Dendritic cell treated with granulocyte-macrophage colony-stimulating factor and Interleukin-4, amounts not matched to agents 40 ng/mL and 50 ng/mL, for 4 days (primary cell): ENCODE measurements at regions of chr17 and their contacts with region 1.

Region 1: DNA sequence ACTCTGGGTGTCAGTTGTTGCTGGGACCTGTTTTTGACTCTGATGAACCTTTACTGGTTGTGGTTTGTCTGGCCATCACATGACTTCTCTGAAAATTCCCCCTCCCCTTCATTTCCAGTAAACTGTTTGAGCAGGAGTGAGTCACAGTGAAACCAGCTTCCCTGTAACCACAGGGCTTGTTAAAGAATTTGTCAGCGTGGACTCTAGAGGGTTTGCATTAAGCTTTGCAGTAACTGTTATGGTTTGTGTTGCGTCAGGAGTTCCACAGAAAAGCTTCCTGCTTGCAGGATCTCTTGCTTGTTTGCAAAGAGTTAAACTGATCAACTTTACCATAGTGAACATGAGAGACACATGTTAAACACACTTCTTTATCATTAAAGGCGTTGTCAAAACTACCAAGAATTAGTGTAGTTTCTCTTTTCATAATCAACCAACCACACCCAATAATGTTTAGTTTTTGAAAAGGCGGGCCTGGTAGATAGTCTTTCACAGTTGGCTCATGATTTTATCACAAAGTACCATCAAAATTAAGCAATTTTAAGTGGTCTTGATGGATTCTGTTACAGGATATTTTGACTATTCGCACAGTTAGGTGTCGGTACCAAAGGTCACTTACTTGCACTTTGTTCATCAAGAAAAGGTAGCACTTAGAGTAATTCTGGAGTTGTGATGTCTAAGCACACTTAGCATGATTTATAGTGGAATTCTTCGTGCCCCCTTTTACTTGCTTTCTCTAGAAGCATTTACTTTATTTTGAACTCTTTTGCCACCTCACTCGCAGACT is 79.3 kb downstream of the VMP1 start:
- H3K4me3 Mint-ChIP-seq: peak overlapping the region; percentile 61
- H3K27ac Mint-ChIP-seq: peak overlapping the region; percentile 97
- H3K4me1 Mint-ChIP-seq: peaks cover 49% of the 10 kb centered on the region
- H3K27me3 Mint-ChIP-seq: no peaks in the 10 kb centered on the region

Region 2: DNA sequence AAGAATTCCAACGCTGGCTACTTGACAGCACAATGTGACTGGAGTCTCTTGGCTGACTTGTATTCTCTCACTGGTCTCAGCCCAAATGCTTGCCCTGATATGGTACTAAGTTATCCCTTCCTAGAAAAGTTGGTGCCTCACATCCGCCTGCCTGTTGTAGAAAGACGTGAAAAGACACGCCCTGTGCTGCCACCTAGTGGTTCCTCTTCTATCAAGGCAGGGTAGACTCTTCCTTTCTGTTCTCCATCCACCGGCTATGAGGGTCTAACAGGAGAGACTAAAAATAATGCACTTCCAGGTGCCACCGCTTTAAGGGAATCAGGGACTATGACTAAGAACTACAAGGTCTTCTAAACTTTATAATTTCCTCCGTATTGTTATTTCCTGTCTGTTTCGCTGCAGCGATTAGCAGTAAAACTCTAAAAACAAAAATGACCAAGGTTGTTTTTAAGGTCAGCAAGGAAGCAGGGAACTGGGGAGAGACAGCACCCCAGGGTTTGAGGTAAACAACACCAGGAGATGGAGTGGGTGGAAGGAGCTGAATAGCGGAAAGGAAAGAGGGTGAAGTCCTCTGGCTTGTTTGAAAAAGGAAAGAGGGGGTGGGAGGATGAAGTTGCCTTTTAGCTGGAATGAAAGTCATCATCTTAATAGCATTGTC is 345.8 kb before region 1 on chr17:
- intact Hi-C with region 1: no loop called
- H3K4me3 Mint-ChIP-seq: peak overlapping the region; percentile 40
- H3K27ac Mint-ChIP-seq: peak overlapping the region; percentile 47
- H3K4me1 Mint-ChIP-seq: peaks cover 49% of the 10 kb centered on the region
- H3K27me3 Mint-ChIP-seq: no peaks in the 10 kb centered on the region

Region 3: DNA sequence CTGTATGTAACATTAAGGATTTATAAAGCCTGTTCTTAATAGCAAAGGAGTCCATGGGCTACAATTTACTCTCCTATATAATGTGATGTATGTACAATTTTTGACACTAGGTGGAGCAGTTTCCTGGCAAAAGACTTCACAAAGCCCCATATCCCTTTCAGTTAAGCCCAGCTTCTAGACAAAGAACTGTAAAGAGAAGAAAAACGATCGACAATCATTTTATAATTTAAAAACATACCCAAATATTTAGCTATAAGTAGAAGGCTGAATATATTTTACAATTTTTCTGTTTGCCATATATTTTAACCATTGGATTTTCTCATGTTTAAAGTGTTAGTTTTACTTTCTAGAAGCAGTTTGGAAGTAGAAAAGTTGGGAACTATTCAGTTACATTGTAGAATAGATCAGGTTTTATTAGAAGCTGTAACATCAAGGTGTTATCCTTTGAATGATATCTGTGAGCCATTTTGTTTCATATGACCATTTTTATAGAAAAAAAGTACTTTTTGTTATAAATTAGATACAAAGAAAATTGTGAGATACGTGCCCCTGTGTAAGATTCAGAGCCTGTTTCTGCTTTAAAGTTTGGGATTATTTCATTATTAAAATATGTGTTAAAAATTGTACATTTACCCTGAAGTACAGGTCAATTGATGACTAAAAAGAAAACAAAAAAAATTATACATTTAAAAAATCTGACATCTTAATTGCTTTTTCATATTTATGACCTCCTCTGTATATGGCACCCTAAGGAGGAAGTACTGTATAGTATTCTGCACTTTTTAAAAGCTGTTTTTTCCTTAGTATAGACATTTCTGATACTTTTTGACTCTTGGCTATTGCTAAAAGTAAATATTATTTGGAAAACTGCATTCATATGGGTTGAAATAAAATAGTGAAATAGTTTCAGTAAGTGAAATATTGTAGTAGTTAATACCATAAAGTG is 32.9 kb before region 1 on chr17:
- intact Hi-C with region 1: loop called (anchors 5 kb)
- H3K4me3 Mint-ChIP-seq: no peak overlapping the region
- H3K27ac Mint-ChIP-seq: peak overlapping the region; percentile 83
- H3K4me1 Mint-ChIP-seq: peaks cover 37% of the 10 kb centered on the region
- H3K27me3 Mint-ChIP-seq: no peaks in the 10 kb centered on the region

Region 4: DNA sequence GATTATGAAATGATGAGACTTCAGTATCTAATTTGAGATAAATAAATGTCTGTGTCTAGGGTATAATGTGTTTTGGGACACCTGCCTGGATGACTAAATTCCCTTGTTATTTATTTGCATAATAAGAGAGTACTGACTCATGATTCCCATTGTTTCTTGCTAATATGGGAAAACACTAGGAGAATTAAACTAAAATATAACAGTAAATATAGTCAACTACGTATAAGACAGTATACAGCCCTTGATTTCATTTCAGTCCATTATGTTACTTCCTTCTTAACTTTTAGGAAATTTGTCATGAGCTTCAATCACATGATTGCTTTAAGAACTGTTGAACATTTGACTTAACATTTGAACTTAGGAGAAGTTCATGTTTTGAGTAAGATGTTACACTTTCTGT is 16.8 kb before region 1 on chr17:
- intact Hi-C with region 1: loop called (anchors 1 kb)
- H3K4me3 Mint-ChIP-seq: no peak overlapping the region
- H3K27ac Mint-ChIP-seq: peak overlapping the region; percentile 78
- H3K4me1 Mint-ChIP-seq: peaks cover 20% of the 10 kb centered on the region
- H3K27me3 Mint-ChIP-seq: no peaks in the 10 kb centered on the region

Region 5: GRCh38 chr17:59804901-59805465 is 18.3 kb after region 1 on chr17:
- intact Hi-C with region 1: loop called (anchors 1 kb)
- H3K4me3 Mint-ChIP-seq: peak overlapping the region; percentile 63
- H3K27ac Mint-ChIP-seq: peak overlapping the region; percentile 89
- H3K4me1 Mint-ChIP-seq: peaks cover 25% of the 10 kb centered on the region
- H3K27me3 Mint-ChIP-seq: no peaks in the 10 kb centered on the region

Region 6: GRCh38 chr17:59837308-59838051 is 50.8 kb after region 1 on chr17:
- intact Hi-C with region 1: loop called (anchors 1 kb)
- H3K4me3 Mint-ChIP-seq: peak overlapping the region; percentile 93
- H3K27ac Mint-ChIP-seq: peak overlapping the region; percentile 100
- H3K4me1 Mint-ChIP-seq: peaks cover 17% of the 10 kb centered on the region
- H3K27me3 Mint-ChIP-seq: no peaks in the 10 kb centered on the region

Region 7: GRCh38 chr17:60006124-60006523 is 219.4 kb after region 1 on chr17:
- intact Hi-C with region 1: no loop called
- H3K4me3 Mint-ChIP-seq: no peak overlapping the region
- H3K27ac Mint-ChIP-seq: no peak overlapping the region
- H3K4me1 Mint-ChIP-seq: no peaks in the 10 kb centered on the region
- H3K27me3 Mint-ChIP-seq: peaks cover 6% of the 10 kb centered on the region